ENCODE measurements at regions of chr7 and their contacts with region 1.

Region 1: DNA sequence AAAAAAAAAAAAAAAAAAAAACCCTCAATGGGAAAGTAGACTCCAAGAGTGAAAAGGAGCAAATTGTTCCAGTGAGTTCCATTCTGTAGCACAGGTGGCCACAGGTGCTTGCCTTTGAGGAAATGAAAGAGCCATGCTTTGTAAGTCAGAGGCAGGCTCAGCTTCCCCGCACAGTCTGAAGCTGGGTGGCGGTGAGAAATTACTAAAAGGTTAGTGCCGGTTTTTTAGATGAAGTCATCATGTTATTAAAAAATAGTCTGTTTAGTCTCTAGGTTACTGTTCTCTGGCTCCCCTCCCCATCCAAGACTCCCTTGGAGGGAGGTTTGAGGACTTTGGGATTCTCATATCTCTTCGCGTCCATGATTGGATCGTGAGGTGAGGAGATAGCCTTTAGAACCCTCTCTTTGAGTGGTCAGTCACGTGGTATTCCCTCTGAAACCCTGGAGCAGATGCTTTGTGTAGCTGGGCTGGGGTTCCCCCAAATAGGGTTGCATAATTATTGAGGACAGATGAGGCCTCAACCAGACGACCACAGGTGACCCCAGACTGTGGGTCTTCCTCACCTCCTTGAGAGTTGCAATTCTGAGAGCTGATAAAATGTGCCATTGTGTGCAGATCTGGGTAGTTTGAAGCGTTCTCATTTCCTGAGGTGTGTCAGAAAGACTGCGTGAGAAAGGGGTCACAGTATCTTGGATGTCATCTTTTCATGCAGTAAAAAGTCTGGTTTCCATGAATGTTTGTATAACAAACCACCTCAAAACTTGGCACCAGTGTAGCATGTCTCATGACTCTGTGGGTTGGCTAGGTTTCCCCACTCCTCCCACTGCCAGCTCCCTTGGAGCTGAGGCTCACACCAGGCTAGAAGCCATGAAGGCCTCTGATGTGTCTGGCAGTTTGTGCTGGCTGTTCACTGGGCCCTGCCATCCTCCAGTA is 27.1 kb downstream of the OGDH start:
- DNase-seq: peak; percentile 86
- ATAC-seq: peak; percentile 65
- H3K4me3 ChIP-seq: no peak overlapping the region
- H3K4me3 Mint-ChIP-seq: peak overlapping the region; percentile 63
- H3K27ac ChIP-seq: peak overlapping the region; percentile 93 to 95
- H3K27ac Mint-ChIP-seq: peak overlapping the region; percentile 97
- H3K4me1 ChIP-seq: peaks cover 75 to 100% of the 10 kb centered on the region in 2 donors
- H3K4me1 Mint-ChIP-seq: peaks cover 85% of the 10 kb centered on the region
- H3K27me3 ChIP-seq: no peaks in the 10 kb centered on the region
- H3K27me3 Mint-ChIP-seq: no peaks in the 10 kb centered on the region
- CTCF ChIP-seq: no peak

Region 2: DNA sequence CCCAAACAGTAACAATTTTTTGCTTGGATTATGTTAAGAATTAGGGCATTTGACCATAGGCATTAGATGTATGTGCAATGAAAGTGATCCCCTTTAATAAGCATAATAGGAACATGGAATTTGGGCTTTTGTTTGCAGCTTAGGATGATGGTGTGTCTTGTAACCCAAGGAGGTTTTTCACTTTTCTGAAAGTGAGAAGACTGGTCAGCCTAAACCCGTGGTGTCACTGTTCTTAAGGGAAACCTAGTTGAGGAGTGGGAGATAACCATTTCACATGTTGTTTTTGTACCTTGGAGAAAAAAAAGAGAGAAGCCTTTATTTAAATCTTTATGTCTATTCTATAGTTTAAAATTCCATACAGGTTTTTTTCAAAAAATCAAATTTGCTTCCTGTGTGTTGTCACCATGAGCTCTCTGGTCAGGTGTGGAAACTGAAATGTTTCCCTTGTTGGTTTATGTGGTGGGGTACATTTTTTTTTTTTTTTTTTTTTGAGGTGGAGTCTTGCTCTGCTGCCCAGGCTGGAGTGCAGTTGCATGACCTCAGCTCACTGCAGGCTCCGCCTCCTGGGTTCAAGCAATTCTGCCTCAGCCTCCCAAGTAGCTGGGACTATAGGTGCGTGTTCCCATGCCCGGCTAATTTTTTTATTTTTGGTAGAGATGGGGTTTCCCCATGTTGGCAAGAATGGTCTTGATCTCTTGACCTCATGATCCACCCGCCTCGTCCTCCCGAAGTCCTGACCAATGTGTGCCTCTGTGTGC is 374.2 kb after region 1 on chr7:
- CTCF ChIA-PET with region 1: no interaction called
- POLR2A ChIA-PET with region 1: interaction called, 14 read pairs
- intact Hi-C with region 1: no loop called
- DNase-seq: no peak
- ATAC-seq: peak; percentile 78
- H3K4me3 ChIP-seq: no peak overlapping the region
- H3K4me3 Mint-ChIP-seq: peak overlapping the region; percentile 58
- H3K27ac ChIP-seq: peak overlapping the region in 1 of 2 donors; percentile 54
- H3K27ac Mint-ChIP-seq: peak overlapping the region; percentile 76
- H3K4me1 ChIP-seq: peaks cover 27 to 31% of the 10 kb centered on the region in 2 donors
- H3K4me1 Mint-ChIP-seq: peaks cover 47% of the 10 kb centered on the region
- H3K27me3 ChIP-seq: no peaks in the 10 kb centered on the region
- H3K27me3 Mint-ChIP-seq: no peaks in the 10 kb centered on the region
- CTCF ChIP-seq: no peak

Measured in B cell (primary cell).